Activated CD4-positive, alpha-beta memory T cell treated with anti-CD3 and anti-CD28 coated beads for 36 hours (primary cell): ENCODE measurements at regions of chr6 and their contacts with region 1.

Region 1: DNA sequence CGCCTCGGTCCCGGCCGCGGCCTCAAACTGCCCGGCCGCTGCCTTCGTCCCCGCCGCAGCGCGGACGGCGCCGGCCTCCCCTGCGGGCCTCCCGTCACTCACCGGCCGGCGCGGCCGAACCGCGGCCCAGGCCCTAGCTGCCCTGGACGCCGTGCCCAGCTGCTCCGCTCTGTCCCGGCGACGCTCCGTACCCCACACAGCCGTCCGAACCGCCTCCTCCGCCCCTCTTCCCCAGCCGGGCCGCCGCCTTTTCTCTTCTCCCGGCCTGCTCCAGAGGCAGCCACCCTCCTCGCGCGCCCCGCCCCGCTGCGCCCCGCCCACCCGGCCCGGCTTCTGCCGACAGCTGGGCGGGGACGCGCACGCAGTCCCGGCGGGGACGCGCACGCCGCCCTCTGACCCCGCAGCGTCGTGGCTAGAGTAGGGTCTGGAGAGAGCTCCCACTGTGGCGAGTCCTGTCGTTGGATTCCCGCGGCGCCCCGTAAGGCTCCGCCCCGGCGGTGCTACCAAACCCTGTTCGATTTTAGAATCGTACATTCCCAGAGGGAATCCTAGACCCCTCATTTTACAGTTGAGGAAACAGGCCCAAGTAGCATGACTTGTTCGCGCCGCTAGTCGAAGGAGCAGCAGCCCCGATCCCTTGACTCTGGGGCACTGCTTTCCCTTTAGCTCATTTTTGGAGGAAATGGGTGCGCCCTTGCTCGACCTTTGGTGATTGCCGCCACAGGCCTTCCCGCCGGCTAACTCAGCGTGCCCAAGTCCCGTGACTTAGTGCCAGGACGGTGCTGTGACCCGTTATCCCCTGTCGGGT is at the start of gene FBXO30:
- DNase-seq: peak; percentile 91
- H3K4me3 Mint-ChIP-seq: peak within 1 kb of the TSS; percentile 93
- H3K27ac Mint-ChIP-seq: peak within 1 kb of the TSS; percentile 94
- H3K4me1 Mint-ChIP-seq: peaks cover 34% of the 10 kb centered on the region
- H3K27me3 Mint-ChIP-seq: no peaks in the 10 kb centered on the region
- total RNA-seq, gene FBXO30: 5.0 to 5.1 TPM

Region 2: DNA sequence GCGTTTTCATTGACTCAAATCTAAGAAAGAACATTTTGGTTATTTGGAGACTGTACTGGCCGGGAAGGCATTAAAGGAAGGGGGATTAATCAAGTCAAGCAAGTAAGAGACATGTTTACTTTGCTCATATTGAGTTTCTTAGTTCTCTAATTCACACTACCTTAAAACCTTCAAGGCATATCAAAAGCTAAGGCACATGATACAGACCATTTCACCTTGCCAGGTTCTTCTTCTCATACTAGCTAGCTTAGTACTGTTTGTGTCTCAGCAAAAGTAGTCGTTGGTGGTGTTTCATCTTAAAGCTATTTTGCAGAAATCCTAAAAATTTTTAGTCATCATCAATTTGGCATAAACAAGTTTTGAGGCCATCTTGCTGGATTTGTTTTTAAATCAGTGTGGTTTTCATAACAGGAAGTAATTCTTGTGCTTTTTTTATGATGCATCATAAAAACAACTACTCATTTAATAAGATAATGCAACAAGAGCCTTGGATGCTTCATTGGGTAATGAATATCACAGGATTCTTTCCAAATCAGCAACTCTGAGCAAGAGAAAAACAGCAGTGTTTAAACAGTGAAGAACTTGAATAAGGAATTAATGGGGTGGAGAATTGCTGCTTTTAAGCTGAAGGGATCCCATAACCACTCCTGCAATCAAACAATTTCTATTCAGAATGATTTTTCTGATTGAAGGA is 504.7 kb before region 1 on chr6:
- CTCF ChIA-PET with region 1: no interaction called
- POLR2A ChIA-PET with region 1: no interaction called
- intact Hi-C with region 1: no loop called
- DNase-seq: no peak
- H3K4me3 Mint-ChIP-seq: no peak overlapping the region
- H3K27ac Mint-ChIP-seq: no peak overlapping the region
- H3K4me1 Mint-ChIP-seq: no peaks in the 10 kb centered on the region
- H3K27me3 Mint-ChIP-seq: peaks cover 3% of the 10 kb centered on the region

Region 3: DNA sequence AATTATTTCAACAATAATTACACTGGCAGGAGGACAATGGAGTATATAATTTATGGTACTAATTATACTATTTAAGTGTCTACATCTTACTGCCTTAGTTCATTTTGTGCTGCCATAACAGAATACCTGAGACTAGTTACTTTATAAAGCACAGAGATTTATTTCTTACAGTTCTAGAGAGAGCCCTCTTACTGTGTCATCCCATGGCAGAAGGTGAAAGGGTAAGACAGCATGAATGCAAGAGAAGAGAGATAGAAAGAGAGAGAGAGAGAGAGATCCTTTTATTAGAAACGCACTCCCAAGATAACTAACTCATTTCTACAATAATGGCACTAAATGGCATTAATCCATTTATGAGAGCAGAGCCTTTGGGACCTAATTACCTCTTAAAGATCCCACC is 394.1 kb before region 1 on chr6:
- CTCF ChIA-PET with region 1: no interaction called
- POLR2A ChIA-PET with region 1: no interaction called
- intact Hi-C with region 1: no loop called
- DNase-seq: no peak
- H3K4me3 Mint-ChIP-seq: no peak overlapping the region
- H3K27ac Mint-ChIP-seq: no peak overlapping the region
- H3K4me1 Mint-ChIP-seq: no peaks in the 10 kb centered on the region
- H3K27me3 Mint-ChIP-seq: no peaks in the 10 kb centered on the region

Region 4: GRCh38 chr6:145836170-145836569 is 21.5 kb after region 1 on chr6:
- CTCF ChIA-PET with region 1: no interaction called
- POLR2A ChIA-PET with region 1: interaction called, 5 read pairs
- intact Hi-C with region 1: loop called (anchors 1 kb)
- DNase-seq: peak; percentile 50
- H3K4me3 Mint-ChIP-seq: no peak overlapping the region
- H3K27ac Mint-ChIP-seq: no peak overlapping the region
- H3K4me1 Mint-ChIP-seq: peaks cover 8% of the 10 kb centered on the region
- H3K27me3 Mint-ChIP-seq: no peaks in the 10 kb centered on the region

Region 5: GRCh38 chr6:145850671-145851070 is 36.0 kb after region 1 on chr6:
- CTCF ChIA-PET with region 1: no interaction called
- POLR2A ChIA-PET with region 1: no interaction called
- intact Hi-C with region 1: no loop called
- DNase-seq: no peak
- H3K4me3 Mint-ChIP-seq: no peak overlapping the region
- H3K27ac Mint-ChIP-seq: no peak overlapping the region
- H3K4me1 Mint-ChIP-seq: no peaks in the 10 kb centered on the region
- H3K27me3 Mint-ChIP-seq: no peaks in the 10 kb centered on the region

Region 6: GRCh38 chr6:145963216-145964068 is 148.7 kb after region 1 on chr6:
- CTCF ChIA-PET with region 1: interaction called, 3 read pairs
- POLR2A ChIA-PET with region 1: interaction called, 3 read pairs
- intact Hi-C with region 1: loop called (anchors 1 kb)
- DNase-seq: peak; percentile 60
- H3K4me3 Mint-ChIP-seq: peak overlapping the region; percentile 94
- H3K27ac Mint-ChIP-seq: peak overlapping the region; percentile 85
- H3K4me1 Mint-ChIP-seq: peaks cover 50% of the 10 kb centered on the region
- H3K27me3 Mint-ChIP-seq: no peaks in the 10 kb centered on the region

Region 7: DNA sequence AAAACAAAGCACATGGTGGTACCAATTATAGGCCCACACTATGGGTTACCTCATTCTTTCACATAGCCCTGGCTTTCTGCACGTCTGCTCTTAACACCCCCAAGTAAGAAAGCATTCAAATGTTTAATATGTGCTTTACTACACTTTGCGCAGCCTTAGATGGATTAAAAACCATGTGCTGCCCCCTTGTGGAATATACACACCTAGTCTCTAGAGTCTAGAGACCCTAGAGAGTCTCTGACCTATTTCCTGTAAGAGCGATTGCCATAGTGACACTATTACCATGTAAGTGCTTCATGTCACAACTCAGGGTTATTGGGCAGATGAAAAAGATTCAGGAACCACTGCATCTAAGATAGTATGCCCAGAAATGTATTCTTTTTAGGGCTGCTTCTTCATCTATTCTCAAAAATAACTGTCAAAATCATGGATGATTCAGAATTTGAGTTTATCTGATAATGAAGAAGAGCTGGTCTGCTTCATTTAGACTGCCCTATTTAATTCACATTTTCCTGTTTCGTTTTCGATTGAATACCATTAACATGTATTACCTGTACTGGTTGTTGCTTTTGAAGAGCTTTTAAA is 970.4 kb after region 1 on chr6:
- CTCF ChIA-PET with region 1: no interaction called
- POLR2A ChIA-PET with region 1: no interaction called
- intact Hi-C with region 1: loop called (anchors 10 kb)
- DNase-seq: peak; percentile 13
- H3K4me3 Mint-ChIP-seq: no peak overlapping the region
- H3K27ac Mint-ChIP-seq: no peak overlapping the region
- H3K4me1 Mint-ChIP-seq: peaks cover 9% of the 10 kb centered on the region
- H3K27me3 Mint-ChIP-seq: peaks cover 1% of the 10 kb centered on the region